ENCODE measurements at regions of chr10 and their contacts with region 1.

Region 1: DNA sequence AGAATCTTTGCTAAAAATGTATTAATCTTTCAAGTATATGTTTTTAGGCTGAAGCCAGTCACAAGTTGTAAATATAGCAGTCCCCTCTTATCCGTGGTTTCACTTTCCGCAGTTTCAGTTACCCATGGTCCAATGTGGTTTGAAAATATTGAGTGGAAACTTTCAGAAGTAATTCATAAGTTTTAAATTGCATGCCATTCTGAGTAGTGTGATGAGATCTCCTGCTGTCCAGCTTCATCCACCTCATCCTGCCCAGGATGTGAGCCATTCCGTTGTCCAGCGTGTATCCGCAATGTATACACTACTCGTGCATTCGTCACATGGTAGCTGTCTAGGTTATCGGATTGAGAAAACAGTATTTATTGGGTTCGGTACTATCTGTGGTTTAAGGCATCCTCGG is 12.2 kb downstream of the PDCD4 start:
- DNase-seq: no peak
- CTCF ChIP-seq: no peak

Region 2: GRCh38 chr10:110547139-110547761 is 336.7 kb before region 1 on chr10:
- in situ Hi-C with region 1: no loop called
- DNase-seq: peak; percentile 67
- CTCF ChIP-seq: peak; percentile 66

Region 3: GRCh38 chr10:110746254-110746826 is 137.6 kb before region 1 on chr10:
- in situ Hi-C with region 1: loop called (anchors 10 kb)
- DNase-seq: peak; percentile 46
- CTCF ChIP-seq: peak; percentile 60

Region 4: GRCh38 chr10:110820321-110820814 is 63.6 kb before region 1 on chr10:
- in situ Hi-C with region 1: no loop called
- DNase-seq: no peak
- CTCF ChIP-seq: no peak

Region 5: DNA sequence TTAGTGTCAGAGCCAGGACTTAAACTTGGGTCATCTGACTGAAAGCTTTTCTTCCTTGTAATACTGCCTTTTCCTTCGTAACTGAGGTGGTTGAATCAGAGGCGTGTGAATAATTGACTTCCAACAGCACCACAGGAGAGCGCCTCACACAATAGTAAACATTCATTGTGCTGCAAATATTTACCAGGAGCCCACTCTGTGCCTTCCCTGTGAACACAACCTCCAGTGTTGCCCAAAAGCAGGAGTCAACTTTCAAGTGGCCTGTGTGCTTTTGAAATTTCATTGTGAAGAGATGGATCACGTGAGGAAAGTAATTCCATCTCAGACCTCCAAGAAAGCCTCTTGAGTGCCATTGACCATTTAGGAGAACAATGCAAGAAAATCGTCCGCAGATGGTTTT is 253.1 kb after region 1 on chr10:
- in situ Hi-C with region 1: no loop called
- DNase-seq: no peak
- CTCF ChIP-seq: no peak

Measured in GM13977 (cell line).